Motor neuron (in vitro differentiated cells): ENCODE measurements at regions of chr15 and their contacts with region 1.

Region 1: DNA sequence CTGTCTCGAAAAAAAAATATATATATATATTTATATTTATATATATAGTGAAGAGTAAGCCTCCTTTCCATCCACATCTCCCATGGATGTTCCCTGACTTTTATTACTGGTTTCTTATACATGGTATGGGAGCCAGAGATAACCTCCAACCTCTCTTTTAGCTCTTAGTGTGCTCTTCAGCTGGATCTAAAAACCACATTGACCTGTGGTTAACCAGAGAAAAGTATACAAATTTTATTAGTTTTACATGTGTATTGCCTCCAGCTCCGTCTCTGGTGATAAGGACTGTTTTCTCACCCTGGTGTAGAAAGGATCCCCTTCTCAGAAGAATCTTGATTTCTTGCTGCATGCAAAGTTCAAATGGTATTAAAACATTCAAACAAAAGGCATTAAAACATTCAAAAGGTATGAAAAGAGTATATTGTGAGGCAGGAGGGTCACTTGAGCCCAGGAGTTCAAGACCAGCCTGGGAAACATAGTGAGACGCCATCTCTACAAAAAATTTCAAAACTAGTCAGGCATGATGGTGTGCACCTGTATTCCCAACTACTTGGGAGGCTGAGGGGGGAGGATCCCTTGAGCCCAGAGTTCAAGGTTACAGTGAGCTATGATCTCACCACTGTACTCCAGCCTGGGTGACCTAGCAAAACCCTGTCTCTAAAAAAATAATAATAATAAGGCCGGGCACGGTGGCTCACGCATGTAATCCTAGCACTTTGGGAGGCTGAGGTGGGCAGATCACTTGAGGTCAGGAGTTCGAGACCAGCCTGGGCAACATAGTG is 13.5 kb upstream of the TTBK2 start:
- ATAC-seq: no peak
- H3K4me3 ChIP-seq: no peak overlapping the region
- H3K27ac ChIP-seq: no peak overlapping the region
- H3K4me1 ChIP-seq: no peaks in the 10 kb centered on the region

Region 2: DNA sequence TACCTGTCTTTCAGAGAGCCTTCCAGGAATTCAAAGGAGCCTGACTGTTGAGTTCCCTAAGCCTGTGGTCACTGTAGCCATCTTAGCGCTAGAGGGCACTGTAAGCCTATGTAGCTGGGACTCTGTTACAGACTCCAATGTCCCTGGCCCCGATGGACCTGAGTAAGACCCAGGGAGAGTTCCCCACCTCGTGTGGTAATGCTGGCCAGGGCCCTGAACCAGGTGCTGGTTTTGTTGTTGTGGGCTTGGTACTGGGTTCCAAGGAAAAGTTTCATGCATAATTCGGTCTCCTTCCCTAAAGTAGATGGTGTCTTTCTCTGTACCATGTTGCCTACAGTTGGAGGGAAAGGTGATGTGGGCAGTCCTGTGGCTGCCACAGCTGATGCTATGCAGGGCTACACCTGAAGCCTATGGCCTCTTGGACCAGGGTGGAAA is 229.6 kb before region 1 on chr15:
- in situ Hi-C with region 1: loop called in 3 of 9 experiments (anchors 10 to 25 kb)
- ATAC-seq: peak; percentile 84 to 100 (median 93)
- H3K4me3 ChIP-seq: no peak overlapping the region
- H3K27ac ChIP-seq: no peak overlapping the region
- H3K4me1 ChIP-seq: no peaks in the 10 kb centered on the region